ENCODE measurements at regions of chr6 and their contacts with region 1.

Region 1: GRCh38 chr6:2765166-2765895 is at the start of gene WRNIP1:
- DNase-seq: peak; percentile 98
- ATAC-seq: peak; percentile 90
- H3K4me3 Mint-ChIP-seq: peak within 1 kb of the TSS; percentile 94
- H3K27ac Mint-ChIP-seq: peak within 1 kb of the TSS; percentile 98
- H3K4me1 Mint-ChIP-seq: peaks cover 51% of the 10 kb centered on the region
- H3K27me3 Mint-ChIP-seq: no peaks in the 10 kb centered on the region
- total RNA-seq, gene WRNIP1: 41.6 to 42.3 TPM

Region 2: GRCh38 chr6:2558861-2559801 is 206.2 kb before region 1 on chr6:
- CTCF ChIA-PET with region 1: no interaction called
- POLR2A ChIA-PET with region 1: no interaction called
- intact Hi-C with region 1: no loop called
- DNase-seq: no peak
- ATAC-seq: no peak
- H3K4me3 Mint-ChIP-seq: no peak overlapping the region
- H3K27ac Mint-ChIP-seq: no peak overlapping the region
- H3K4me1 Mint-ChIP-seq: peaks cover 10% of the 10 kb centered on the region
- H3K27me3 Mint-ChIP-seq: peaks cover 64% of the 10 kb centered on the region

Region 3: DNA sequence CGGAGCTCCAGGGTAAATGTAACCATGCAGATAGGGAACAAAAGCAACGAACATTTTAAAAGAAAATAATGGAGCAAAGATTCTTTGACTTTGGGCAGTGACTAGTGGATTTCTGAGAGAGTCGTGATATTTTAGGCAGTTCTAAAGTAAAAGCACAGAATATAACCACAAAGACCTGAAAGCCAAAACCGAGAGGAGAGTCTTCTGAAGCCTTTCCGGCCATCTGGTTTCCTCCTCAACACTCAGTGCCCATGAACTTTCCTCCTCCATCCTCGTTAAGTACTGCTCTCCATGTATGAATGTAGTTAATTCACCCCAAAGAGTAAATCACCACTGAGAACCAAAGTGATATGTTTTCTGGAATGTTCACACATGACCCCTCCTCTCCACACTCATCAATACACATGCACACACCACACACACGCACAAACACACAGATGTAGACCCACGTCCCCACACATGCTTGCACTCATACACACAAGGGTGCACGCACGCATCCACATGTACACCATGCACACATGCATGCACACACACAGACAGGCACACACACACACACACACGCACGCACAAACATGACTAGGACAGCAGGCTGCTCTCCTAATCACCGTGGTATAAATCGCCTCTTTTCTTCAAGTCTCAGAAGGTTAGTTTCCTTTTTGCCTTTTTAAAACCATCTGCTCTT is 124.1 kb before region 1 on chr6:
- CTCF ChIA-PET with region 1: no interaction called
- POLR2A ChIA-PET with region 1: no interaction called
- intact Hi-C with region 1: no loop called
- DNase-seq: no peak
- ATAC-seq: no peak
- H3K4me3 Mint-ChIP-seq: no peak overlapping the region
- H3K27ac Mint-ChIP-seq: no peak overlapping the region
- H3K4me1 Mint-ChIP-seq: no peaks in the 10 kb centered on the region
- H3K27me3 Mint-ChIP-seq: peaks cover 36% of the 10 kb centered on the region

Region 4: GRCh38 chr6:2738373-2738979 is 26.9 kb before region 1 on chr6:
- CTCF ChIA-PET with region 1: interaction called, 22 read pairs
- POLR2A ChIA-PET with region 1: interaction called, 4 read pairs
- intact Hi-C with region 1: loop called in 1 of 2 experiments (anchors 1 kb)
- DNase-seq: peak; percentile 70
- ATAC-seq: peak; percentile 62
- H3K4me3 Mint-ChIP-seq: no peak overlapping the region
- H3K27ac Mint-ChIP-seq: no peak overlapping the region
- H3K4me1 Mint-ChIP-seq: peaks cover 5% of the 10 kb centered on the region
- H3K27me3 Mint-ChIP-seq: no peaks in the 10 kb centered on the region

Region 5: GRCh38 chr6:2841264-2842138 is 76.2 kb after region 1 on chr6 and contains the start of gene SERPINB1:
- CTCF ChIA-PET with region 1: interaction called, 9 read pairs
- POLR2A ChIA-PET with region 1: interaction called, 8 read pairs
- intact Hi-C with region 1: loop called in 1 of 2 experiments (anchors 1 kb)
- DNase-seq: peak; percentile 96
- ATAC-seq: peak; percentile 86
- H3K4me3 Mint-ChIP-seq: peak within 1 kb of the TSS; percentile 96
- H3K27ac Mint-ChIP-seq: peak within 1 kb of the TSS; percentile 91
- H3K4me1 Mint-ChIP-seq: peaks cover 67% of the 10 kb centered on the region
- H3K27me3 Mint-ChIP-seq: no peaks in the 10 kb centered on the region
- total RNA-seq, gene SERPINB1: 200 to 243 TPM

Region 6: GRCh38 chr6:2952557-2953095 is 187.3 kb after region 1 on chr6:
- CTCF ChIA-PET with region 1: interaction called, 17 read pairs
- POLR2A ChIA-PET with region 1: no interaction called
- intact Hi-C with region 1: no loop called
- DNase-seq: peak; percentile 80
- ATAC-seq: peak; percentile 97
- H3K4me3 Mint-ChIP-seq: peak overlapping the region; percentile 46
- H3K27ac Mint-ChIP-seq: peak overlapping the region; percentile 74
- H3K4me1 Mint-ChIP-seq: peaks cover 15% of the 10 kb centered on the region
- H3K27me3 Mint-ChIP-seq: no peaks in the 10 kb centered on the region

Region 7: GRCh38 chr6:3052481-3053230 is 287.3 kb after region 1 on chr6:
- CTCF ChIA-PET with region 1: no interaction called
- POLR2A ChIA-PET with region 1: no interaction called
- intact Hi-C with region 1: loop called in 1 of 2 experiments (anchors 5 kb)
- DNase-seq: no peak
- ATAC-seq: no peak
- H3K4me3 Mint-ChIP-seq: peak overlapping the region; percentile 69
- H3K27ac Mint-ChIP-seq: no peak overlapping the region
- H3K4me1 Mint-ChIP-seq: peaks cover 15% of the 10 kb centered on the region
- H3K27me3 Mint-ChIP-seq: no peaks in the 10 kb centered on the region

Region 8: DNA sequence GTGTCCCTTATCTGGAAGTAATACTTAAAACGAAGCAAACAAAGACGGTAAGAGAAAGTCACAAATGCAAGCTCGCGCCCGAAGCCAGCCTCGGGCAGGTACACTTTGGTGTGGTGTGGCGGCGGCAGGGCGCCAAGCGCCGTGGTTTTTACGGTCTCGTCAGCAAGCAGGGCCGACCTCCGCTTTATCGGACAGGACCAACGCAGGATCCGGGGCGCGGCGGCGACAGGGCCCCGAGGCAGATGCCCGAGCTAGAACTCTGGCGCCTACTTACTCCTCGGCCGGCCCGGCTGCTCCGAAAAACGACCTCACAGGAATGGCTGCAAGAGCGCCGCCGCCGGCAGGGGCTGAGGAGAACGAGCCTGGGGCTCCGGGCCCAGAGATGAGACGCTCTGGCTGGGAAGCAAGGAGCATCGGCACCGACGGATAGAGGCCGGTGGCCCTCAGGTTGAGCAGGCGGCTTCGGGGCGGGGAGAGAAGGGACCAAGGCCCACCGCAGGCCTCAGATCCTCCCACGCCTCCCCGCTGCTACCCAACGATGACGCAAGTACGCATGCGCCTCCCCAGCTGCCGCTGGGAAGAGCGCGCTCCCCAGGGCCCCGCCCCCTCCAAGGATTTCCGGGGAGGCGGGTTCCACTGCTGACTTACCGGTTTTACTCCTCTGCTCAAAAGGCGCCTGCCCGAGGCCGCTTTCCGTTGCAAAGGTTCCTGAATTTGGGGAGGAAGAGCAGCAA is 1253.0 kb after region 1 on chr6:
- CTCF ChIA-PET with region 1: no interaction called
- POLR2A ChIA-PET with region 1: no interaction called
- intact Hi-C with region 1: loop called in 1 of 2 experiments (anchors 2 kb)
- DNase-seq: peak; percentile 99
- ATAC-seq: peak; percentile 65
- H3K4me3 Mint-ChIP-seq: peak overlapping the region; percentile 95
- H3K27ac Mint-ChIP-seq: peak overlapping the region; percentile 99
- H3K4me1 Mint-ChIP-seq: peaks cover 53% of the 10 kb centered on the region
- H3K27me3 Mint-ChIP-seq: no peaks in the 10 kb centered on the region

Measured in activated CD4-positive, alpha-beta T cell treated with anti-CD3 and anti-CD28 coated beads for 36 hours (primary cell).